Naive thymus-derived CD4-positive, alpha-beta T cell (primary cell): ENCODE measurements at regions of chr7 and their contacts with region 1.

Region 1: GRCh38 chr7:141551094-141551781 is at the start of gene AGK:
- DNase-seq: peak; percentile 61 to 83 (median 74)
- ATAC-seq: peak; percentile 96
- H3K4me3 ChIP-seq: peak within 1 kb of the TSS; percentile 89
- H3K4me3 Mint-ChIP-seq: peak within 1 kb of the TSS; percentile 83 to 99 (median 92)
- H3K27ac ChIP-seq: peak within 1 kb of the TSS; percentile 73
- H3K27ac Mint-ChIP-seq: peak within 1 kb of the TSS; percentile 52 to 96 (median 90)
- H3K4me1 ChIP-seq: peaks cover 12 to 17% of the 10 kb centered on the region in 2 donors
- H3K4me1 Mint-ChIP-seq: peaks cover 14 to 44% (median 40%) of the 10 kb centered on the region in 7 donors
- H3K27me3 ChIP-seq: no peaks in the 10 kb centered on the region
- H3K27me3 Mint-ChIP-seq: peaks cover 0 to 4% (median 0%) of the 10 kb centered on the region in 5 donors
- total RNA-seq, gene AGK: 24.3 to 58.8 (median 29.9) TPM

Region 2: GRCh38 chr7:140673063-140673773 is 878.0 kb before region 1 on chr7:
- CTCF ChIA-PET with region 1: no interaction called
- POLR2A ChIA-PET with region 1: no interaction called
- intact Hi-C with region 1: loop called in 1 of 2 experiments (anchors 2 kb)
- DNase-seq: peak; percentile 56 to 78 (median 75)
- ATAC-seq: peak; percentile 82
- H3K4me3 ChIP-seq: peak overlapping the region; percentile 82
- H3K4me3 Mint-ChIP-seq: peak overlapping the region; percentile 81 to 94 (median 89)
- H3K27ac ChIP-seq: peak overlapping the region; percentile 91
- H3K27ac Mint-ChIP-seq: peak overlapping the region; percentile 68 to 97 (median 88)
- H3K4me1 ChIP-seq: peaks cover 11 to 14% of the 10 kb centered on the region in 2 donors
- H3K4me1 Mint-ChIP-seq: peaks cover 16 to 42% (median 37%) of the 10 kb centered on the region in 7 donors
- H3K27me3 ChIP-seq: no peaks in the 10 kb centered on the region
- H3K27me3 Mint-ChIP-seq: peaks cover 0 to 7% (median 0%) of the 10 kb centered on the region in 5 donors

Region 3: DNA sequence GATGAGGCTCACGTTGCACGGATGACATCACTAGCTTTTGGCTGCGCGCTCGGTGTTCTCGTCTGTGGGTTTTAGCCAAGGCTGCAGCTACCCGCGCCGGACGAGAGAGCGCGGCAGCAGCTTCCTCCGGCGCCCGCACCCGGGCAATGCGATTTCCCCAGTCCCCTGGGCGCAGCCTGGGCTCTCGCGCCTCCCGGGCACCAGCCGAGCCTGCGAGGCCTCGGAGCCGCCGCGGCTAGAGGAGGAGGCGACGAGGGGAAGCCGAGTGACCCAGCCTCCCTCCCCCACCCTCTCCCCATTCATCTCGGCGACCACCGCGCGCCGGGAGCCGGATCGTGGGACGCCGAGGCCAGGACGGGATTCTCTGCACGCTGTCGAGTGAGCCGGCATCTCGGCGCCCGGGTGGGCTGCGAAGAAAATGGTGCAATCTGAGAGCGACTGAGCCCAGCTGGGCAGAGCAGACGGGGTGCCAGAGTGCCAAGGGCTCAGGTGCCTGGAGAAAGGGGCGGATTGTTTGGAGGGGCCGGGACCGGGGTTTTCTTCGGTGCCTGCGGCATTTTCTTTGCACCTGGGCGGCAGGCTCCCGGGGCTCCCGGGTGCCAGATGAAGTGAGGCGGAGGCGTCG is 478.6 kb before region 1 on chr7:
- CTCF ChIA-PET with region 1: no interaction called
- POLR2A ChIA-PET with region 1: no interaction called
- intact Hi-C with region 1: loop called in 1 of 2 experiments (anchors 5 kb)
- DNase-seq: peak in 5 of 9 donors; percentile 2 to 39 (median 5)
- ATAC-seq: peak; percentile 45
- H3K4me3 ChIP-seq: peak overlapping the region; percentile 42
- H3K4me3 Mint-ChIP-seq: peak overlapping the region; percentile 74 to 92 (median 86)
- H3K27ac ChIP-seq: no peak overlapping the region
- H3K27ac Mint-ChIP-seq: no peak overlapping the region
- H3K4me1 ChIP-seq: peaks cover 5 to 6% of the 10 kb centered on the region in 2 donors
- H3K4me1 Mint-ChIP-seq: peaks cover 17 to 30% (median 28%) of the 10 kb centered on the region in 7 donors
- H3K27me3 ChIP-seq: peaks cover 4 to 31% of the 10 kb centered on the region in 2 donors
- H3K27me3 Mint-ChIP-seq: peaks cover 42 to 49% (median 48%) of the 10 kb centered on the region in 5 donors

Region 4: GRCh38 chr7:141654551-141654950 is 103.3 kb after region 1 on chr7:
- CTCF ChIA-PET with region 1: no interaction called
- POLR2A ChIA-PET with region 1: no interaction called
- intact Hi-C with region 1: loop called in 1 of 2 experiments (anchors 5 kb)
- DNase-seq: peak in 8 of 9 donors; percentile 44 to 79 (median 71)
- ATAC-seq: peak; percentile 96
- H3K4me3 ChIP-seq: no peak overlapping the region
- H3K4me3 Mint-ChIP-seq: no peak overlapping the region
- H3K27ac ChIP-seq: no peak overlapping the region
- H3K27ac Mint-ChIP-seq: peak overlapping the region; percentile 5 to 81 (median 41)
- H3K4me1 ChIP-seq: no peaks in the 10 kb centered on the region
- H3K4me1 Mint-ChIP-seq: peaks cover 5 to 11% (median 11%) of the 10 kb centered on the region in 7 donors
- H3K27me3 ChIP-seq: no peaks in the 10 kb centered on the region
- H3K27me3 Mint-ChIP-seq: no peaks in the 10 kb centered on the region